ENCODE measurements at regions of chr5 and their contacts with region 1.

Region 1: GRCh38 chr5:83076742-83077661 is at the starts of genes TMEM167A and XRCC4:
- DNase-seq: peak; percentile 99
- H3K4me3 Mint-ChIP-seq: peak within 1 kb of the TSS; percentile 93
- H3K27ac Mint-ChIP-seq: peak within 1 kb of the TSS; percentile 96
- H3K4me1 Mint-ChIP-seq: peaks cover 21% of the 10 kb centered on the region
- H3K27me3 Mint-ChIP-seq: no peaks in the 10 kb centered on the region
- CTCF ChIP-seq: no peak
- total RNA-seq, gene TMEM167A: 84.1 and 122 TPM in 2 replicates
- total RNA-seq, gene XRCC4: 7.1 and 8.4 TPM in 2 replicates

Region 2: DNA sequence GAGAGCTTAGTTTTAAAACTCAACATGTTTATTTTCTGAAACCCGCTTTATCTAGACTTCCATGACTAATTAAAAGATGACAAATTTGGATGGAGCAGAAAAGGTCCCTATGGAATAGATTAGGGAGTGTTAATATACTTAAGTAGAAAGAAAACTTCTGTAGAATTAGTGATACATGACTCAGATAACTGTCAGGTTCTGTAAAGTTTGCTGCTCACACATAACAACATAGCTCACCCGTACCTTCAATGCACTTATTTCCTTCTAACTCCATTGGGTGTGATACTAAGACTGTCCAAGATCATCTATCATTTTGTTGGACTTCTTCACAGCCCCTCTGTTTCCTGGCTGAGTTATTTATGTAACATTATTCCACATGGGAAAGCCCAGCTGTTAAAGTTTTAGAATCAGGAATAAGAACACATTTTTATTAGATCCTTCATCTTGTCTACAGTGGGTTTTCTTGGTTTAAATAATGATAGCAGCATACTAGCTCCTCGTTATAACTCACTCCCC is 27.6 kb before region 1 on chr5:
- CTCF ChIA-PET with region 1: no interaction called
- POLR2A ChIA-PET with region 1: interaction called, 11 read pairs
- intact Hi-C with region 1: no loop called
- DNase-seq: no peak
- H3K4me3 Mint-ChIP-seq: no peak overlapping the region
- H3K27ac Mint-ChIP-seq: no peak overlapping the region
- H3K4me1 Mint-ChIP-seq: no peaks in the 10 kb centered on the region
- H3K27me3 Mint-ChIP-seq: no peaks in the 10 kb centered on the region
- CTCF ChIP-seq: no peak

Region 3: GRCh38 chr5:83066548-83067110 is 10.4 kb before region 1 on chr5:
- CTCF ChIA-PET with region 1: no interaction called
- POLR2A ChIA-PET with region 1: interaction called, 18 read pairs
- intact Hi-C with region 1: no loop called
- DNase-seq: no peak
- H3K4me3 Mint-ChIP-seq: no peak overlapping the region
- H3K27ac Mint-ChIP-seq: no peak overlapping the region
- H3K4me1 Mint-ChIP-seq: no peaks in the 10 kb centered on the region
- H3K27me3 Mint-ChIP-seq: no peaks in the 10 kb centered on the region
- CTCF ChIP-seq: no peak

Region 4: GRCh38 chr5:83102364-83102980 is 25.5 kb after region 1 on chr5:
- CTCF ChIA-PET with region 1: no interaction called
- POLR2A ChIA-PET with region 1: interaction called, 11 read pairs
- intact Hi-C with region 1: no loop called
- DNase-seq: no peak
- H3K4me3 Mint-ChIP-seq: no peak overlapping the region
- H3K27ac Mint-ChIP-seq: no peak overlapping the region
- H3K4me1 Mint-ChIP-seq: peaks cover 14% of the 10 kb centered on the region
- H3K27me3 Mint-ChIP-seq: no peaks in the 10 kb centered on the region
- CTCF ChIP-seq: no peak

Region 5: DNA sequence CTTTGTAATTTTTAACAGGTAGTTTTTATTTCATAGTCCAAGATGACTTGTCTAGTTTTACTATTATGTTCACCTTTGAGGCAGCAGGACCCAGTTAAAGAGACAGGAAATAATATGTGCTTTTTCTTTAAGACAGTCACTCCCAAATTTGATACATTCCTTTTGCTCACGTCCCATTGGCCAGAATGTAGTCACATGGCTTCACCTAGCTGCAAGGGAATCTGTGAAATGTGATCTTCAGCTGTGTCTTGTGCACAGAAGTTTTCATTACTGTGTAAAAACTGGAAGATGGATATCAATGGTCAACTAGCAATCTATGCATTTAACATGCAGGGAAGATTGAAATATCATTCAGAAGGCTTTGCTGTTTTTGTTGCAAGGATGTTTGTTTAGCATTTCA is 41.5 kb after region 1 on chr5:
- CTCF ChIA-PET with region 1: no interaction called
- POLR2A ChIA-PET with region 1: no interaction called
- intact Hi-C with region 1: no loop called
- DNase-seq: no peak
- H3K4me3 Mint-ChIP-seq: no peak overlapping the region
- H3K27ac Mint-ChIP-seq: no peak overlapping the region
- H3K4me1 Mint-ChIP-seq: no peaks in the 10 kb centered on the region
- H3K27me3 Mint-ChIP-seq: no peaks in the 10 kb centered on the region
- CTCF ChIP-seq: no peak

Region 6: GRCh38 chr5:83249156-83249555 is 172.2 kb after region 1 on chr5:
- CTCF ChIA-PET with region 1: no interaction called
- POLR2A ChIA-PET with region 1: interaction called, 14 read pairs
- intact Hi-C with region 1: no loop called
- DNase-seq: peak; percentile 54
- H3K4me3 Mint-ChIP-seq: peak overlapping the region; percentile 63
- H3K27ac Mint-ChIP-seq: peak overlapping the region; percentile 88
- H3K4me1 Mint-ChIP-seq: peaks cover 4% of the 10 kb centered on the region
- H3K27me3 Mint-ChIP-seq: no peaks in the 10 kb centered on the region
- CTCF ChIP-seq: no peak

Region 7: GRCh38 chr5:83430130-83431010 is 353.4 kb after region 1 on chr5:
- CTCF ChIA-PET with region 1: interaction called, 5 read pairs
- POLR2A ChIA-PET with region 1: interaction called, 4 read pairs
- intact Hi-C with region 1: loop called (anchors 2 kb)
- DNase-seq: peak; percentile 72
- H3K4me3 Mint-ChIP-seq: no peak overlapping the region
- H3K27ac Mint-ChIP-seq: no peak overlapping the region
- H3K4me1 Mint-ChIP-seq: no peaks in the 10 kb centered on the region
- H3K27me3 Mint-ChIP-seq: no peaks in the 10 kb centered on the region
- CTCF ChIP-seq: peak; percentile 78

Region 8: GRCh38 chr5:83564069-83564749 is 487.2 kb after region 1 on chr5:
- CTCF ChIA-PET with region 1: no interaction called
- POLR2A ChIA-PET with region 1: interaction called, 6 read pairs
- intact Hi-C with region 1: loop called (anchors 5 kb)
- DNase-seq: peak; percentile 58
- H3K4me3 Mint-ChIP-seq: no peak overlapping the region
- H3K27ac Mint-ChIP-seq: no peak overlapping the region
- H3K4me1 Mint-ChIP-seq: peaks cover 27% of the 10 kb centered on the region
- H3K27me3 Mint-ChIP-seq: no peaks in the 10 kb centered on the region
- CTCF ChIP-seq: peak; percentile 51

Measured in MCF 10A (cell line).